Activated B cell treated with CpG ODN at 0.5 μM for 24 hours (primary cell): ENCODE measurements at regions of chr16 and their contacts with region 1.

Region 1: DNA sequence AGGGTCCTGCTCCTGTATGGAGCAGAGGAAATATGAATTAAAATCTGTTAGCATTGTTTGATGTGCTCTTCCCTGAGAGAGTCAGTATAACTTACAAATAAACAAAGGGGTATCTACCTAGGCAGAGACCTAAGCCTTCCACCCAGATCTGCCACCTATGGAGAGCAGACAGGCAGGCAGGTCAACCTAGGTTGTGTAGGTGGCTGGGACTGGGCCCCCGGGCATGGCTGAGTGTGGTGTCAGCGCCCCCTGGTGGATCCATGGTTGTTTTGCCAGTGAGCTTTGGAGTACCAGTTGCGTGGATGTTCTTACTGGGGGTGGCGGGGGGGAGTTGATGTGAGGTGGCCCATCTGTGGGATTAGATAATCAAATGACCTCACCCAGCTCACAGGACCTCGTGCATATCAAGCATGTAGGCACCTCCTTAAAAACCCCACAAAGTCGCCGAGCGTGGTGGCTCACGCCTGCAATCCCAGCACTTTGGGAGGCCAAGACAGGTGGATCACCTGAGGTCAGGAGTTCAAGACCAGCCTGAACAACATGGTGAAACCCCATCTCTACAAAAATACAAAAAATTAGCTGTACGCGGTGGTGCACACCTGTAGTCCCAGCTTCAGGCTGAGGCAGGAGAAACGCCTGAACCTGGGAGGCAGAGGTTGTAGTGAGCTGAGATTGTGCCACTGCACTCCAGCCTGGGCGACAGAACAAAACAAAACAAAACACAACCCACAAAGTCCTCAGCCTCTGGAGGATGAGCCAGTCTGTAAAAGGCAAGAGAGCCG is 17.6 kb downstream of the DUS2 start:
- DNase-seq: peak; percentile 82
- ATAC-seq: peak; percentile 77
- H3K4me3 Mint-ChIP-seq: peak overlapping the region; percentile 77
- H3K27ac Mint-ChIP-seq: peak overlapping the region; percentile 86
- H3K4me1 Mint-ChIP-seq: peaks cover 63% of the 10 kb centered on the region
- H3K27me3 Mint-ChIP-seq: no peaks in the 10 kb centered on the region
- CTCF ChIP-seq: peak; percentile 73

Region 2: DNA sequence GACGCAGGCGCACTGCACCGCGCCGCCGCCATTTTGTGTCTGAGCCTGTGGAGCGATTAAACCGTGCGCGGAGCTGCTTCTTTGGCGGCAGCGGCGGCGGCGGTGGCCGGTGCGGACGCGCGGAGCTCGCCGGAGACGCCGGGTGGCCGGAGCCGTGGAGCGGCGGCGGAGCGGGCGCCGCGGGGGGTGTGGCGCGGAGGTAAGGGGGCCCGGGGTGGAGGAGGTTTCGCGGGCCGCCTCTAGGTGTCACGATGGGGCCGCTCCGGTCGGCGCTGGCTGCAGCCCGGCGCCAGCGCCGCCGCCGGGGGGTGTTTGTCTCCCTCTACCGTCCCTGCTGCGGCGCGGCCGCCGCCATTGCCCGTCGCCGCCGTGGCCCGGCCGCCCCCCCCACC is 478.2 kb before region 1 on chr16 and contains the start of gene CTCF:
- CTCF ChIA-PET with region 1: no interaction called
- POLR2A ChIA-PET with region 1: no interaction called
- intact Hi-C with region 1: no loop called
- DNase-seq: no peak
- ATAC-seq: peak; percentile 56
- H3K4me3 Mint-ChIP-seq: peak within 1 kb of the TSS; percentile 91
- H3K27ac Mint-ChIP-seq: peak within 1 kb of the TSS; percentile 91
- H3K4me1 Mint-ChIP-seq: peaks cover 62% of the 10 kb centered on the region
- H3K27me3 Mint-ChIP-seq: no peaks in the 10 kb centered on the region
- CTCF ChIP-seq: no peak
- total RNA-seq, gene CTCF: 53.1 and 59.6 TPM in 2 replicates

Region 3: GRCh38 chr16:67672739-67673662 is 367.7 kb before region 1 on chr16:
- CTCF ChIA-PET with region 1: interaction called, 11 read pairs
- POLR2A ChIA-PET with region 1: no interaction called
- intact Hi-C with region 1: loop called (anchors 1 kb)
- DNase-seq: no peak
- ATAC-seq: peak; percentile 42
- H3K4me3 Mint-ChIP-seq: no peak overlapping the region
- H3K27ac Mint-ChIP-seq: peak overlapping the region; percentile 3
- H3K4me1 Mint-ChIP-seq: peaks cover 42% of the 10 kb centered on the region
- H3K27me3 Mint-ChIP-seq: no peaks in the 10 kb centered on the region
- CTCF ChIP-seq: no peak

Region 4: DNA sequence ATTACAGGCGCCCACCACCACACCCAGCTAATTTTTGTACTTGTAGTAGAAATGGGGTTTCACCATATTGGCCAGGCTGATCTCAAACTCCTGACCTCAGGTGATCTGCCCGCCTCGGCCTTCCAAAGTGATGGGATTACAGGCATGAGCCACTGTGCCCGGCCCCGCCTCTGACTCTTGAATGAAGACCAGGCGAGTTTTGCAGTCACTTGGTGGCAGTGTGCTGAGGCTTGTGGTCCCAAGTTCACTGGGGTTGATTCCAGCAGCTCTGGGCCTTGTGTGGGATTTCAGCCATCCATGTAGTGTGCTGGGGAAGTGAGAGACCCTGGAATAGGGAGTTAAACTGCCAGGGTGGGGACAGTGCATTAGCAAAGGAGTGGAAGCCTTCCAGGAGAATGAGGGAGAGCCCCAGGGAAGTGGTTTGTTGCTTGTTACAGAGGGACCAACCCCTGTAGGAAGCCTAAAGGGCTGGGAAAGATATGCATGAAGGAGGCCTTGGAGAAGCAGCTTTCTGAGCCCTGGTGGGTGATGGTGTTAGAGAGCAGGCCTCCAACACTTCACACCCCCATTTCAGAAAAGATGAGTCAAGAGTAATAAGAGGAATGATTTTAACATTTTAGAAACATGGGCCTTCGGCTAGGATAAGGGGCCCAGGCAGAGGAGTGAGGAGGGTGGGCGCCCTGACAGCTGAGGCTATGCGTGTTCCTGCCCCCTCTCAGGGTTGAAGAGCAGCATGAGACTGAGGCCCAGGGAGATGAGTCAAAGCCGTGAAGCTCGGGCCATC is 133.1 kb before region 1 on chr16:
- CTCF ChIA-PET with region 1: interaction called, 4 read pairs
- POLR2A ChIA-PET with region 1: interaction called, 10 read pairs
- intact Hi-C with region 1: no loop called
- DNase-seq: no peak
- ATAC-seq: no peak
- H3K4me3 Mint-ChIP-seq: no peak overlapping the region
- H3K27ac Mint-ChIP-seq: no peak overlapping the region
- H3K4me1 Mint-ChIP-seq: peaks cover 5% of the 10 kb centered on the region
- H3K27me3 Mint-ChIP-seq: no peaks in the 10 kb centered on the region
- CTCF ChIP-seq: no peak

Region 5: DNA sequence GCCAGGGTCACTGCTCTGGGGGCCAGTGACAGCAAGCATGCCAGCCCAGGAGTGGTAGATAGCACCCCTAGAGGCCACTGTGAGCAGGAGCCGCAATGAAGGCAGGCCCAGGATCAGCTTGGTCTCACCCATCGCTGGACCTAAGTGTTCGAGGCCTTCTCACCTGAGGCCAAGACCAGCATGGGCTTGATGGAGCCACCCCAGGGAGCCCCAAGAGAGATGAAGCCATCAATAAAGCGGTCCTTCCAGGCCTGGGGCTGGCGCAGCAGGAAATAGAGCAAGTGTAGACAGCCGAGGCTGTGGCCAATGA is 98.5 kb before region 1 on chr16:
- CTCF ChIA-PET with region 1: interaction called, 28 read pairs
- POLR2A ChIA-PET with region 1: interaction called, 5 read pairs
- intact Hi-C with region 1: no loop called
- DNase-seq: no peak
- ATAC-seq: peak; percentile 81
- H3K4me3 Mint-ChIP-seq: no peak overlapping the region
- H3K27ac Mint-ChIP-seq: no peak overlapping the region
- H3K4me1 Mint-ChIP-seq: peaks cover 22% of the 10 kb centered on the region
- H3K27me3 Mint-ChIP-seq: no peaks in the 10 kb centered on the region
- CTCF ChIP-seq: no peak

Region 6: GRCh38 chr16:67999985-68000384 is 40.7 kb before region 1 on chr16:
- CTCF ChIA-PET with region 1: interaction called, 17 read pairs
- POLR2A ChIA-PET with region 1: interaction called, 17 read pairs
- intact Hi-C with region 1: no loop called
- DNase-seq: no peak
- ATAC-seq: peak; percentile 27
- H3K4me3 Mint-ChIP-seq: peak overlapping the region; percentile 74
- H3K27ac Mint-ChIP-seq: peak overlapping the region; percentile 87
- H3K4me1 Mint-ChIP-seq: peaks cover 72% of the 10 kb centered on the region
- H3K27me3 Mint-ChIP-seq: no peaks in the 10 kb centered on the region
- CTCF ChIP-seq: no peak

Region 7: DNA sequence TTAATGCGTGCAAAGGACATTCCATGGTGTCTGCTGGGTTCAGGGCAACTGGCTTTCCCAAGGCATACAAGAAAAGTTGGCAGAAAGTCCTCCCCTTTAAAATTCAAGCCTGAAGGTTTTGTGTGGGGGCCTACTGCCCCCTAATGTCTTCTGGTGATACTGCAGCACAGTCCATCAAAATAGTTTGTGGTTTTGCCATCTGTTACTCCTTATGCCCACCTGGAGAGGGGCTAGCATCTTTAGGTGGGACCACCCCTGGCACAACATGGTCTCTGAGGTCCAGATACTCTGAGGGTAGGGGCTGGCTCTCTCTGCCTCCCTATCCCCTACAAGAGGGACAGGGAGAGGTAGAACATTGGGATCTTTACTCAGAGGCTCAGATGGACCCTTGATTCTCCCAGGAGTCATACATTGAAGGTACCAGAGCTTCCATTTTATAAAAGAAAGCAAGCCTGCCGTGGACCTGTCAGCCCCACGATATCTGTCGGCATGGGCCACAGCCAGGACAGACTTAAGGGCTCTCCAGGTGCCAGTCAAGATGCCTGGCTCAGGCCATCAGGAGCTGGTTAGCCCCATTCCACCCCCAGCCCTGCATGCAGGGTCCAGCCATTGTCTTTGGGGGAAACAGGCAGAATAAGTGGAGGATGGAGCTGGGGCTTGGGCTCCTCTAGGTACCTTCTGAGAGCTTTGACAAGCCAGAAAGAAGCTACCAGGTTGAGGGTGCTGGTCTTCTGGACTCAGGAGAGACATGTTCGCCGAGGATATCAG is 188.9 kb after region 1 on chr16:
- CTCF ChIA-PET with region 1: interaction called, 4 read pairs
- POLR2A ChIA-PET with region 1: no interaction called
- intact Hi-C with region 1: loop called (anchors 2 kb)
- DNase-seq: no peak
- ATAC-seq: peak; percentile 63
- H3K4me3 Mint-ChIP-seq: no peak overlapping the region
- H3K27ac Mint-ChIP-seq: peak overlapping the region; percentile 41
- H3K4me1 Mint-ChIP-seq: peaks cover 35% of the 10 kb centered on the region
- H3K27me3 Mint-ChIP-seq: no peaks in the 10 kb centered on the region
- CTCF ChIP-seq: peak; percentile 29

Region 8: DNA sequence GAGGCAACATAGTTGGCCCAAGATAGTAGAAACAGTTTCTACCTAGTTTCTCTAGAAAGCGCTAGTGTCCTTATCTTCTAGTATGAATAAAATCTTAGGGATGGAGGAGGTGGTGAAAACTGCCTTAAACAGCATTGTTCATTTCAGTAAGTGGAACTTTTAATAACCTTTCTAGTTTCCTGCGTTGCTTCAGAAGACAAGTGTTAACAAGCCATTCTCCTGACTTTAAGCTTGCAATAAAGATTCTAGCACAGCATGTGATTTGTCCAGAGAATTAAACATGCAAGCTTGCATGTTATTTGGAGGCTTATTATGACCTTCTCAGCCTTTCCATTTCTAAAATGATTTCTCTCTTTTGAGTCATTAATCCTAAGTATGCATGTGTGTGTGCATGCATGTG is 874.9 kb after region 1 on chr16:
- CTCF ChIA-PET with region 1: no interaction called
- POLR2A ChIA-PET with region 1: no interaction called
- intact Hi-C with region 1: no loop called
- DNase-seq: no peak
- ATAC-seq: no peak
- H3K4me3 Mint-ChIP-seq: no peak overlapping the region
- H3K27ac Mint-ChIP-seq: no peak overlapping the region
- H3K4me1 Mint-ChIP-seq: no peaks in the 10 kb centered on the region
- H3K27me3 Mint-ChIP-seq: no peaks in the 10 kb centered on the region
- CTCF ChIP-seq: no peak